T-cell (primary cell): ENCODE measurements at regions of chr11 and their contacts with region 1.

Region 1: GRCh38 chr11:66069715-66070603 is at the start of gene PACS1:
- DNase-seq: peak; percentile 47 to 90 (median 67)
- ATAC-seq: peak; percentile 71 to 78 (median 74)
- H3K4me3 ChIP-seq: peak within 1 kb of the TSS; percentile 81 to 91
- H3K4me3 Mint-ChIP-seq: peak within 1 kb of the TSS; percentile 93 to 98 (median 97)
- H3K27ac ChIP-seq: peak within 1 kb of the TSS; percentile 81
- H3K27ac Mint-ChIP-seq: peak within 1 kb of the TSS; percentile 97
- H3K4me1 ChIP-seq: peaks cover 24 to 42% of the 10 kb centered on the region in 2 experiments
- H3K4me1 Mint-ChIP-seq: peaks cover 59 to 75% (median 74%) of the 10 kb centered on the region in 3 donors
- H3K27me3 ChIP-seq: no peaks in the 10 kb centered on the region
- H3K27me3 Mint-ChIP-seq: no peaks in the 10 kb centered on the region
- total RNA-seq, gene PACS1: 222 to 268 (median 236) TPM

Region 2: DNA sequence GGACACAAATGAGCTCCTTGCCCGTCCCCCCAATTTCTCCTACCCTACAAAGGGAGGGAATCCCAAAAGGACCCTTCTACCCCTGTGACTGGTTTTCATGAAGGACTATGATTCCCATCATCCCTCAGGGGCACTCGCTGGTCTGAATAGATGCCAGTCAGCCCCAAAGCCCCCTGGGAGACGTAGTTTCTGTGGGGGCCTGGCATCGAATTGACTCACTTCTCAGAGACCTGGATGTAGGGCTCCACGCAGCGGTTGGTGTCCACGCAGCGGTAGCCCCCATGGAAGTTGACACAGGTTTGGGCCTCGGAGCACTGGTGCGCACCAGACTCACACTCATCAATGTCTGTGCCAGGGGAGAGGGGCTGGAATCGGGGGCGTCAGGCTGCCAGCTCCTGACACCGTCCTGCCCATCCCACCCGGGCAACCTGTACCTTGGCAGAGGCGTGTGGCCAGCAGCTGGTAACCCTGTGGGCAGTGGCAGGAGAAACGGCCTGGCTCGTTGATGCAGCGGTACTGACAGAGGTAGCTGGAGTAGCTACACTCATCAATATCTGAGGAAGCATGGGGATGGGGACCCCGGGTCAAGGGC is 201.8 kb before region 1 on chr11:
- CTCF ChIA-PET with region 1: no interaction called
- POLR2A ChIA-PET with region 1: no interaction called
- DNase-seq: peak in 6 of 35 experiments; percentile 31 to 53 (median 39)
- ATAC-seq: peak; percentile 40 to 77 (median 42)
- H3K4me3 ChIP-seq: no peak overlapping the region
- H3K4me3 Mint-ChIP-seq: no peak overlapping the region
- H3K27ac ChIP-seq: no peak overlapping the region
- H3K27ac Mint-ChIP-seq: no peak overlapping the region
- H3K4me1 ChIP-seq: peaks cover 4 to 30% of the 10 kb centered on the region in 2 experiments
- H3K4me1 Mint-ChIP-seq: peaks cover 13 to 25% (median 16%) of the 10 kb centered on the region in 3 donors
- H3K27me3 ChIP-seq: peaks cover 0 to 7% of the 10 kb centered on the region in 2 experiments
- H3K27me3 Mint-ChIP-seq: no peaks in the 10 kb centered on the region

Region 3: GRCh38 chr11:66045177-66045639 is 24.8 kb before region 1 on chr11:
- CTCF ChIA-PET with region 1: interaction called in 1 of 2 experiments, 11 read pairs
- POLR2A ChIA-PET with region 1: no interaction called
- DNase-seq: peak; percentile 58 to 91 (median 78)
- ATAC-seq: peak; percentile 92 to 96 (median 94)
- H3K4me3 ChIP-seq: no peak overlapping the region
- H3K4me3 Mint-ChIP-seq: no peak overlapping the region
- H3K27ac ChIP-seq: no peak overlapping the region
- H3K27ac Mint-ChIP-seq: peak overlapping the region in 1 of 2 donors; percentile 23
- H3K4me1 ChIP-seq: peaks cover 2 to 18% of the 10 kb centered on the region in 2 experiments
- H3K4me1 Mint-ChIP-seq: peaks cover 11 to 21% (median 13%) of the 10 kb centered on the region in 3 donors
- H3K27me3 ChIP-seq: peaks cover 0 to 26% of the 10 kb centered on the region in 2 experiments
- H3K27me3 Mint-ChIP-seq: peaks cover 4 to 6% of the 10 kb centered on the region in 2 donors

Region 4: GRCh38 chr11:66051766-66052663 is 17.9 kb before region 1 on chr11 and contains the start of gene SF3B2:
- CTCF ChIA-PET with region 1: interaction called, 4 to 10 read pairs
- POLR2A ChIA-PET with region 1: interaction called in 1 of 2 experiments, 6 read pairs
- DNase-seq: peak; percentile 88 to 97 (median 92)
- ATAC-seq: peak; percentile 95 to 99 (median 98)
- H3K4me3 ChIP-seq: peak within 1 kb of the TSS; percentile 95
- H3K4me3 Mint-ChIP-seq: peak within 1 kb of the TSS; percentile 97 to 100 (median 98)
- H3K27ac ChIP-seq: peak within 1 kb of the TSS; percentile 86
- H3K27ac Mint-ChIP-seq: peak within 1 kb of the TSS; percentile 98 to 99
- H3K4me1 ChIP-seq: peaks cover 11 to 32% of the 10 kb centered on the region in 2 experiments
- H3K4me1 Mint-ChIP-seq: peaks cover 30 to 38% (median 32%) of the 10 kb centered on the region in 3 donors
- H3K27me3 ChIP-seq: peaks cover 0 to 24% of the 10 kb centered on the region in 2 experiments
- H3K27me3 Mint-ChIP-seq: peaks cover 4 to 6% of the 10 kb centered on the region in 2 donors
- total RNA-seq, gene SF3B2: 189 to 264 (median 224) TPM

Region 5: DNA sequence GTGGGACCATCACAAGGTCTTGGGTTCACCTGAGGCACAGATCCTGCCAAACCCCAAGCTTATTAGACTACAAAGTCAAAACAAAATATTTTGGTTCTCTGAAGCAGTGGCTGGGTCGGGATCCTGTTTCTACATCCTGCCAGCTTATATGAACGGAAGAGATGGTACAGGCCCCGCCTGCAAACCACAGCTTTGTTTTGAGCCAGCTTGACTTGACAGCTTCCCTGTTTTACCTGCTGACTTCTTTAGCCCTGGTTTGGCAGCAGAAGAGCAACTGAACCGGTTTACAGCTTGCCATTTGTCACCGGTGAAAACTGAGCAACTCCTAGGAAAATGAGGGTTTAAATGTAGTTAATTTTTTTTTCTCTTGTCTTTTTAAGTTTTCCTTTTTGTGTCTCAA is 11.5 kb after region 1 on chr11:
- CTCF ChIA-PET with region 1: interaction called, 5 to 36 read pairs
- POLR2A ChIA-PET with region 1: interaction called, 3 read pairs
- DNase-seq: peak; percentile 52 to 91 (median 83)
- ATAC-seq: peak; percentile 92 to 98 (median 94)
- H3K4me3 ChIP-seq: peak overlapping the region in 1 of 2 donors; percentile 26
- H3K4me3 Mint-ChIP-seq: peak overlapping the region; percentile 83 to 90 (median 85)
- H3K27ac ChIP-seq: peak overlapping the region; percentile 82
- H3K27ac Mint-ChIP-seq: peak overlapping the region; percentile 95 to 100
- H3K4me1 ChIP-seq: peaks cover 58 to 68% of the 10 kb centered on the region in 2 experiments
- H3K4me1 Mint-ChIP-seq: peaks cover 90 to 94% (median 92%) of the 10 kb centered on the region in 3 donors
- H3K27me3 ChIP-seq: no peaks in the 10 kb centered on the region
- H3K27me3 Mint-ChIP-seq: no peaks in the 10 kb centered on the region

Region 6: GRCh38 chr11:66119348-66120133 is 49.6 kb after region 1 on chr11:
- CTCF ChIA-PET with region 1: interaction called, 3 to 5 read pairs
- POLR2A ChIA-PET with region 1: interaction called in 1 of 2 experiments, 10 read pairs
- DNase-seq: no peak
- ATAC-seq: no peak
- H3K4me3 ChIP-seq: no peak overlapping the region
- H3K4me3 Mint-ChIP-seq: peak overlapping the region in 2 of 3 donors; percentile 13 to 74
- H3K27ac ChIP-seq: peak overlapping the region; percentile 22
- H3K27ac Mint-ChIP-seq: peak overlapping the region; percentile 84 to 85
- H3K4me1 ChIP-seq: peaks cover 57 to 58% of the 10 kb centered on the region in 2 experiments
- H3K4me1 Mint-ChIP-seq: peaks cover 91 to 92% (median 91%) of the 10 kb centered on the region in 3 donors
- H3K27me3 ChIP-seq: no peaks in the 10 kb centered on the region
- H3K27me3 Mint-ChIP-seq: no peaks in the 10 kb centered on the region

Region 7: GRCh38 chr11:66136752-66137123 is 66.8 kb after region 1 on chr11:
- CTCF ChIA-PET with region 1: interaction called, 8 to 13 read pairs
- POLR2A ChIA-PET with region 1: interaction called, 4 to 10 read pairs
- DNase-seq: no peak
- ATAC-seq: no peak
- H3K4me3 ChIP-seq: no peak overlapping the region
- H3K4me3 Mint-ChIP-seq: no peak overlapping the region
- H3K27ac ChIP-seq: no peak overlapping the region
- H3K27ac Mint-ChIP-seq: peak overlapping the region; percentile 1 to 76
- H3K4me1 ChIP-seq: peaks cover 0 to 19% of the 10 kb centered on the region in 2 experiments
- H3K4me1 Mint-ChIP-seq: peaks cover 59 to 67% (median 65%) of the 10 kb centered on the region in 3 donors
- H3K27me3 ChIP-seq: no peaks in the 10 kb centered on the region
- H3K27me3 Mint-ChIP-seq: no peaks in the 10 kb centered on the region